ENCODE measurements at regions of chr1 and their contacts with region 1.

Region 1: GRCh38 chr1:213953806-213954205 is 34.0 kb upstream of the PROX1 start:
- DNase-seq: no peak

Region 2: GRCh38 chr1:213704941-213705340 is 248.9 kb before region 1 on chr1:
- intact Hi-C with region 1: no loop called
- DNase-seq: no peak

Region 3: DNA sequence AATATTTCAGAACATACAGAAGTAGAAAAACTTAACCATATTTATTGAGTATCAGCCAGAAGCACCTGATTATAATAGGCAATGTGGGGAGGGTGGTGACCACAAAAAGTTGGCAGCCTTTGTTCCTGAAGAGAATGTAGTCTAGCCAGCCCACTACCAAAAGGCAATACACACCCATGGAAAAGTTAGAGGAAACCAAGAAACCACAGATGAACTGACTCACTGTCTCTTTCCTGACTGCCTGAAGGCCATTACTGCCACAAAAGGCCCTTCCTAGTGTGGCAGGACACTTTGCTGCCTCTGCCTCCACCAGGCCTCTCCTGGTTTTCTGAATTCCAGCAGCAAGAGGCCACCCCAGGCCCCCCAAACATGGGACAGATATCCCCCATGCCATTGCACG is 19.3 kb after region 1 on chr1:
- intact Hi-C with region 1: loop called in 1 of 2 experiments (anchors 1 kb)
- DNase-seq: no peak

Region 4: GRCh38 chr1:214029796-214030195 is 76.0 kb after region 1 on chr1:
- intact Hi-C with region 1: no loop called
- DNase-seq: no peak

Region 5: DNA sequence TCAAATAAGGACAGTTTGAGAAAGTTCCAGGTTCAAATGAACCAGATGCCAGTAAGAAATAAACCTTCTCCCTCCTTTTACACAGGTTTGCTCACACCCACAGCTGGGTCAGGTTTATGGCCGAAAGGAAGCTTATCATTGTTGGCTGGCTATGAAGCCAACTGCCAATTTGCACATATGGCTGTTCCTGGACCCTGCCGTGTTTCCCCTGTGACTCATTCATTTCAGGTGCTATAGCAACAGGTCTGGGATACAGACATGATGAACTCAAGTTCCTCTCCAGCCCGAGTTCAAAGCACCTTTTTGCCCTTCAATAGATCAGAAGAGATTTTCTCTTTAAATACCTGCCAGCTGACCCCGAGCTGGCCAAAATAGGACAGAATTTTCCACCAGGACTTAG is 192.7 kb after region 1 on chr1:
- intact Hi-C with region 1: no loop called
- DNase-seq: no peak